Endothelial cell of umbilical vein (primary cell): ENCODE measurements at regions of chr2 and their contacts with region 1.

Region 1: DNA sequence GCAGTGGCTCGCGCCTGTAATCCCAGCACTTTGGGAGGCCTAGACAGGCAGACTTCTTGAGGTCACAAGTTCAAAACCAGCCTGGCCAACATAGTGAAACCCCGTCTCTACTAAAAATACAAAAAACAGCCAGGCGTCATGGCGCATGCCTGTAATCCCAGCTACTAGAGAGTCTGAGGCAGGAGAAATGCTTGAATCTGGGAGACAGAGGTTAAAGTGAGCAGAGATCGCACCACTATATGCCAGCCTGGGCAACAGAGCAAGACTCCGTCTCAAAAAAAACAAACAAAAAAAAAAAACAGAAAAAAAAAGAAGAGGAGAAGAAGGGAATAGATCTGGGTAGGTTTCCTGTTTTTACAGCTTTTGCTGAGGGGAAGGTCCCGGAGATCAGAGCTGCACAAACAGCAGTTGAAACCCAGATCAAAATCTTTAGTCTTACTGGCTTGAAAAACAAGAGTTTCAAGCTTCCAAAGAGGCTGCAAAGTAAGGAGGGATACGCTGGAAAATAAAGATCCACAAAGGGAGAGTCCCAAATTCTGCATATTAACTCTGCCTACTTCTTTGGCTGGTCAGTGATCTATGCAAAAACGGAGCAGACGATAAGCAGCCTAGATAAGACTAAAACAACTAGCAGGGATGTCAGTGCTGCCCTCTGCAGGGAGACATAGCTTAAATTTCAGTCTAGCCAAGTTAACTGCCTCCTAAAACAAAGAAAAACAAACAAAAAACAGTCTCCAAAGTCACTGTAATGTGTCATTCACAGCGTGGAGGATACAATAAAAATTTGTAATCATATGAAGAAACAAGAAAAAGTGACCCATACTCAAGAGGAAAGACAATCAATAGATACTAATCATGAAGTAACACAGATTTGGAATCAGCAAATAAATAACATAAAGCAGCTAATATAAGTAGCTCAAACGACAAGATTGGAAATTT is 74.1 kb downstream of the TLK1 start:
- DNase-seq: peak; percentile 92
- H3K4me3 ChIP-seq: peak overlapping the region in 1 of 3 experiments; percentile 20
- H3K27ac ChIP-seq: peak overlapping the region; percentile 42
- H3K4me1 ChIP-seq: peaks cover 14% of the 10 kb centered on the region
- H3K27me3 ChIP-seq: no peaks in the 10 kb centered on the region
- CTCF ChIP-seq: peak; percentile 67 to 69
- POLR2A ChIP-seq: no peak

Region 2: DNA sequence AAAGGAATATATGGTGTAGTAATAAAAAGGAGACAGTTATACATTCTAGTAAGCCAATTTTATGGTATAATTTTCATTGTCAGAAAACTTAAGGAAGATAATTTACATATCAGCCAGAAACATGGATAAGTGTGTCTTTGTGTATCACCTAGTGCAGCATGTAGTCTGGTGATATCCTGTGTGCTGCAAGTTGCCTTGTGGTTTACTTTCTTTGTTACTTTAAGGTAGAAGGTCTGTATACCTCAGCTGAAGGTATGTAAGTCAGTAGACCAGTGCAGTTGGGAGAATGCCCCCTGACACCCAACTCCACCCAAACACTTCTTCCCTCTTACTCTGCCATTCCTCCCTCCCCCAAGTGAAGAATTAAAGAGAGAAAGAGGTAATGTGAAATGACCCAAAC is 146.6 kb before region 1 on chr2:
- CTCF ChIA-PET with region 1: no interaction called
- POLR2A ChIA-PET with region 1: no interaction called
- dilution Hi-C with region 1: no loop called
- intact Hi-C with region 1: no loop called
- DNase-seq: no peak
- H3K4me3 ChIP-seq: no peak overlapping the region
- H3K27ac ChIP-seq: no peak overlapping the region
- H3K4me1 ChIP-seq: no peaks in the 10 kb centered on the region
- H3K27me3 ChIP-seq: no peaks in the 10 kb centered on the region
- CTCF ChIP-seq: no peak
- POLR2A ChIP-seq: no peak

Region 3: GRCh38 chr2:170973492-170974303 is 112.9 kb before region 1 on chr2:
- CTCF ChIA-PET with region 1: interaction called, 13 read pairs
- POLR2A ChIA-PET with region 1: no interaction called
- dilution Hi-C with region 1: no loop called
- intact Hi-C with region 1: loop called (anchors 1 kb)
- DNase-seq: peak; percentile 85
- H3K4me3 ChIP-seq: peak overlapping the region; percentile 54 to 74 (median 69)
- H3K27ac ChIP-seq: peak overlapping the region; percentile 79
- H3K4me1 ChIP-seq: peaks cover 8% of the 10 kb centered on the region
- H3K27me3 ChIP-seq: no peaks in the 10 kb centered on the region
- CTCF ChIP-seq: peak; percentile 83 to 98
- POLR2A ChIP-seq: peak; percentile 67

Region 4: DNA sequence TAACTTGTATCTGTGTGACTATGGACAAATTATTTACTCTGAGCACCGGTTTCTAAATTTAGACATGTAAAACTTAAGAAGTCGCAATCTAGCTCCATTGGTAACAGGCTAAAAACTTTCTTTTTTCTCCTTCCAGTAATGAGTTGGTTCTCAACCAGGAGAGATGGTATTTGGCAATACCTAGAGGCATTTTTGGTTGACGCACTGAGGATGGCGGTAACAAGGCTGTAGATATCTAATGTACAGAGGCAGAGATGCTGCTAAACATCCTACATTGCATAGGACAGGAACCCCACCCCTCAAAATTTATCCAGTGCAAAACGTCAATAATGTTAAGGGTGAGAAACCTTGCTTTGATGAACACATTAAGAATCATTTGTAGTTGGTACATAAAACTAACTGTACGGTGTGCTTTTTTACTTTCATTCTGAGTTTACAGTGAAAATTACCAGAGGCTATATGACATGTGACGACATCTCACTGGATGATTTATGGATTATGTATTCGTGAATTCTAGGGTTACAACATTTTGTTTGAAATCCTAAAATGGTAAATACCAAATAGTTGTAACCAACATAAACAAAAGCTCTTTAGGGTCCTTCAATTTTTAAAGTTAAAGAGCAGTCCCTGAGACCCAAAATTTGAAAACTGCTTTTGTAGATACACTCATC is 17.2 kb before region 1 on chr2:
- CTCF ChIA-PET with region 1: interaction called, 13 read pairs
- POLR2A ChIA-PET with region 1: interaction called, 4 read pairs
- dilution Hi-C with region 1: no loop called
- intact Hi-C with region 1: no loop called
- DNase-seq: no peak
- H3K4me3 ChIP-seq: no peak overlapping the region
- H3K27ac ChIP-seq: no peak overlapping the region
- H3K4me1 ChIP-seq: no peaks in the 10 kb centered on the region
- H3K27me3 ChIP-seq: no peaks in the 10 kb centered on the region
- CTCF ChIP-seq: no peak
- POLR2A ChIP-seq: no peak

Region 5: GRCh38 chr2:171109571-171109970 is 22.9 kb after region 1 on chr2:
- CTCF ChIA-PET with region 1: interaction called, 21 read pairs
- POLR2A ChIA-PET with region 1: no interaction called
- dilution Hi-C with region 1: no loop called
- intact Hi-C with region 1: no loop called
- DNase-seq: no peak
- H3K4me3 ChIP-seq: no peak overlapping the region
- H3K27ac ChIP-seq: no peak overlapping the region
- H3K4me1 ChIP-seq: no peaks in the 10 kb centered on the region
- H3K27me3 ChIP-seq: no peaks in the 10 kb centered on the region
- CTCF ChIP-seq: no peak
- POLR2A ChIP-seq: no peak

Region 6: DNA sequence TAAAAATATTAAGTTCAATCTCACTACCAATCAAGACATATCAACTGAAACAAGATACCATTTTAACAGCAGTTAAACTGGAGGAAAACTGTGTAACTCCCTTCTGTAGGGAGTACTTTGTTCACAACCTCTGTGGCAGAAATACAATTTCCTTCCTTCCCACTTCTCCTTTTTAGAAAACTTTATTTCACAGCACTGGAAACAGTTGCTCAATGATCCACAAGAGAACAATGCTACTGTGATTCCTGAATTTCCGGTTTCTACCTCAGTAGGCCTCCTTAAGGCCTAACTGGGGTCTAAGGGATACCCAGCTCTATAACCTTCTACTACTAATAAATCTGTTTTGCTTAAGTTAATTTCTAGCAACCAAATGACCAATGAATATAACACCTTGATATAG is 60.0 kb after region 1 on chr2:
- CTCF ChIA-PET with region 1: interaction called, 13 read pairs
- POLR2A ChIA-PET with region 1: interaction called, 5 read pairs
- dilution Hi-C with region 1: no loop called
- intact Hi-C with region 1: no loop called
- DNase-seq: peak; percentile 83
- H3K4me3 ChIP-seq: peak overlapping the region in 1 of 3 experiments; percentile 26
- H3K27ac ChIP-seq: peak overlapping the region; percentile 71
- H3K4me1 ChIP-seq: peaks cover 29% of the 10 kb centered on the region
- H3K27me3 ChIP-seq: no peaks in the 10 kb centered on the region
- CTCF ChIP-seq: no peak
- POLR2A ChIP-seq: no peak

Region 7: DNA sequence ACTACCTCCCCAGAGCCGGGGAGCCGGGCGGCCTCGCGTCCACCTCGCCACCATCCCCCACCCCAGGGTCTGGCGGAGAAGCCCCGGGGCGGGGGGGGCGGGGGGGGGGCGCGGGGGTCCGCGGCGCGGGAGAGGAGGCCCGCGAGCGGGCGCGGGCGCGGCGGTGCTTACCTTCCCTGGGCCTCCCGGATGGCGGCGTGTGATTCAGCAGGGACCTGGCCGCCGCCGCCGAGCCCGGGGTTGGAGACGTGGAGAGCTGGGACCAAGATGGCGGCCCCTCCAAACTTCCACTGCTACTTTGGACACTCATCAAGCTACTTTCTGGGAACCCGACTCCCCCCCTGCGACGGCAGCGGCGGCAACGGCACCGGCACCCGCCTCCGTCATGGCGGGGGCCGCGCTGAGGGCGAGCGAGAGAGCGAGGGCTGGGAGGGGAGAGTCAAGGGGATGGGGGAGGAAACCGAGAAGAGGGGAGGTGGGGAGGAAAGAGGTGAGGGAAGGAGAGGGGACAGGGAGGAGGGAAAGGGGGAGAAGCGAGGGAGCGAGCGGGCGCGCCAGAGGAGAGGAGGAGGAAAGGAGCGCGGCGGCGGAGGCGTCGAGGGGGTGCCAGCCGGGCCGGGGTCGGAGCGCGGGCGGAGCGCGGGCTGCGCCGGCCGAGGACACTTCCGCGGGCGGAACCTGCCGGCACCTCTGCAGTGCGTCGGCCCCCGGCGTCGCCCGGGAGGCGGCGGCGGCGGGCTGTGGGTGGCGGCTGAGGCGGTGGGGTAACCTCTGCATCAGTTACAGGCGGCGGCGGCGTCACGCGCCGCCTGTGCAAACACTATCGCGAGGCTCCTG is 73.7 kb after region 1 on chr2 and contains the start of gene TLK1:
- CTCF ChIA-PET with region 1: interaction called, 43 read pairs
- POLR2A ChIA-PET with region 1: no interaction called
- dilution Hi-C with region 1: no loop called
- intact Hi-C with region 1: loop called (anchors 2 kb)
- DNase-seq: peak; percentile 69
- H3K4me3 ChIP-seq: peak within 1 kb of the TSS; percentile 93 to 100 (median 99)
- H3K27ac ChIP-seq: peak within 1 kb of the TSS; percentile 86
- H3K4me1 ChIP-seq: peaks cover 13% of the 10 kb centered on the region
- H3K27me3 ChIP-seq: no peaks in the 10 kb centered on the region
- CTCF ChIP-seq: no peak
- POLR2A ChIP-seq: no peak
- total RNA-seq, gene TLK1: 53.7 and 62.7 TPM in 2 replicates

Region 8: DNA sequence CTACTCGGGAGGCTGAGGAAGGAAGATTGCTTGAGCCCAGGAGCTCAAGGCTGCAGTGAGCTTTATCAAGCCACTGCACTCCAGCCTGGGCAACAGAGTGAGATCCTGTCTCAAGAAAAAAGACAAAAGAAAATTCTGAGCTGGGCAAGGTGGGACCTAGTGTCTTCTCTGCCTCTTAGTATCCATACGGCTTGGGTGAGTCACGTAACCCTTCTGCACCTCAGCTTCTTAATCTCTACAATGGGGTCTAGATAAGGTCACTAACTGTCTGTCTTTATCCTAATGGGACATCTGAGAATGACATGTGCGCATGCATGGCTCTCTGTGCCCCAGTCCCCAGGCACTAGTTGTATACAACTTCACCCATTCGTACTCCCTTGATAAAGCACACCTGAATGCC is 127.5 kb after region 1 on chr2:
- CTCF ChIA-PET with region 1: no interaction called
- POLR2A ChIA-PET with region 1: no interaction called
- dilution Hi-C with region 1: no loop called
- intact Hi-C with region 1: no loop called
- DNase-seq: no peak
- H3K4me3 ChIP-seq: no peak overlapping the region
- H3K27ac ChIP-seq: no peak overlapping the region
- H3K4me1 ChIP-seq: no peaks in the 10 kb centered on the region
- H3K27me3 ChIP-seq: peaks cover 4 to 8% of the 10 kb centered on the region in 2 experiments
- CTCF ChIP-seq: no peak
- POLR2A ChIP-seq: no peak

Region 9: GRCh38 chr2:171225302-171225980 is 138.8 kb after region 1 on chr2:
- CTCF ChIA-PET with region 1: no interaction called
- POLR2A ChIA-PET with region 1: no interaction called
- dilution Hi-C with region 1: no loop called
- intact Hi-C with region 1: no loop called
- DNase-seq: peak; percentile 37
- H3K4me3 ChIP-seq: no peak overlapping the region
- H3K27ac ChIP-seq: no peak overlapping the region
- H3K4me1 ChIP-seq: peaks cover 8% of the 10 kb centered on the region
- H3K27me3 ChIP-seq: no peaks in the 10 kb centered on the region
- CTCF ChIP-seq: no peak
- POLR2A ChIP-seq: no peak

Region 10: DNA sequence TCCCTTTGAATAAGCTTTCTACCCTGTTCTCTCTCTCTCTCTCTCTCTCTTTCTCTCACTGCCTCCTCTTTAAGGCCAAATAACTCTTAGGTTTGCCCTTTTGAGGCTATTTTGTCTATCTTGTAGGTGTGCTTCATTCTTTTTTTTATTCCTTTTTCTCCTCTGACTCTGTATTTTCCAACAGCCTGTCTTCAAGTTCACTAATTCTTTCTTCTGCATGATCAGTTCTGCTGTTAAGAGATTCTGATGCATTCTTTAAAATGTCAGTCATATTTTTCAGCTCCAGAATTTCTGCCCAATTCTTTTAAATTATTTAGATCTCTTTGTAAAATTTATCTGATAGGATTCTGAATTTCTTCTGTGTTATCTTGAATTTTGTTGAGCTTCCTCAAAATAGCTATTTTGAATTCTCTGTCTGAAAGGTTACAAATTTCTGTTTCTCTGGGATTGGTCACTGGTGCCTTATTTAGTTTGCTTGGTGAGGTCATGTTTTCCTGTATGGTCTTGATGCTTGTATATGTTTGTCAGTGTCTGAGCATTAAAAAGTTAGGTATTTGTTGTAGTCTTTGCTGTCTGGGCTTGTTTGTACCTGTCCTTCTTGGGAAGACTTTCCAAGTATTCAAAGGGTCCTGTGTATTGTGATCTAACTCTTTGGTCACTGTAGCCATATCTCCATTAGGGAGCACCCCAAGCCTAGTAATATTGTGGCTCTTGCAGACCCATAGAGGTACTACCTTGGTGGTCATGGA is 565.2 kb after region 1 on chr2:
- CTCF ChIA-PET with region 1: no interaction called
- POLR2A ChIA-PET with region 1: no interaction called
- dilution Hi-C with region 1: no loop called
- intact Hi-C with region 1: no loop called
- DNase-seq: no peak
- H3K4me3 ChIP-seq: no peak overlapping the region
- H3K27ac ChIP-seq: no peak overlapping the region
- H3K4me1 ChIP-seq: no peaks in the 10 kb centered on the region
- H3K27me3 ChIP-seq: peaks cover 9 to 28% of the 10 kb centered on the region in 2 experiments
- CTCF ChIP-seq: no peak
- POLR2A ChIP-seq: no peak